Caco-2 (cell line): ENCODE measurements at regions of chr12 and their contacts with region 1.

Region 1: GRCh38 chr12:1690578-1691122 is at the start of gene ADIPOR2:
- DNase-seq: peak; percentile 98 to 99
- H3K4me3 ChIP-seq: peak within 1 kb of the TSS; percentile 76
- H3K4me3 Mint-ChIP-seq: peak within 1 kb of the TSS; percentile 81
- H3K27ac Mint-ChIP-seq: peak within 1 kb of the TSS; percentile 85
- H3K4me1 ChIP-seq: peaks cover 27% of the 10 kb centered on the region
- H3K4me1 Mint-ChIP-seq: peaks cover 12% of the 10 kb centered on the region
- H3K27me3 ChIP-seq: no peaks in the 10 kb centered on the region
- H3K27me3 Mint-ChIP-seq: no peaks in the 10 kb centered on the region
- CTCF ChIP-seq: no peak
- total RNA-seq, gene ADIPOR2: 119 and 125 TPM in 2 replicates

Region 2: GRCh38 chr12:1297206-1297605 is 393.4 kb before region 1 on chr12:
- CTCF ChIA-PET with region 1: no interaction called
- POLR2A ChIA-PET with region 1: no interaction called
- intact Hi-C with region 1: no loop called
- DNase-seq: no peak
- H3K4me3 ChIP-seq: no peak overlapping the region
- H3K4me3 Mint-ChIP-seq: no peak overlapping the region
- H3K27ac Mint-ChIP-seq: no peak overlapping the region
- H3K4me1 ChIP-seq: 0 out of 2 replicates have a peak, but pooled peaks cover 3% of the 10 kb centered on the region
- H3K4me1 Mint-ChIP-seq: no peaks in the 10 kb centered on the region
- H3K27me3 ChIP-seq: no peaks in the 10 kb centered on the region
- H3K27me3 Mint-ChIP-seq: no peaks in the 10 kb centered on the region
- CTCF ChIP-seq: no peak

Region 3: DNA sequence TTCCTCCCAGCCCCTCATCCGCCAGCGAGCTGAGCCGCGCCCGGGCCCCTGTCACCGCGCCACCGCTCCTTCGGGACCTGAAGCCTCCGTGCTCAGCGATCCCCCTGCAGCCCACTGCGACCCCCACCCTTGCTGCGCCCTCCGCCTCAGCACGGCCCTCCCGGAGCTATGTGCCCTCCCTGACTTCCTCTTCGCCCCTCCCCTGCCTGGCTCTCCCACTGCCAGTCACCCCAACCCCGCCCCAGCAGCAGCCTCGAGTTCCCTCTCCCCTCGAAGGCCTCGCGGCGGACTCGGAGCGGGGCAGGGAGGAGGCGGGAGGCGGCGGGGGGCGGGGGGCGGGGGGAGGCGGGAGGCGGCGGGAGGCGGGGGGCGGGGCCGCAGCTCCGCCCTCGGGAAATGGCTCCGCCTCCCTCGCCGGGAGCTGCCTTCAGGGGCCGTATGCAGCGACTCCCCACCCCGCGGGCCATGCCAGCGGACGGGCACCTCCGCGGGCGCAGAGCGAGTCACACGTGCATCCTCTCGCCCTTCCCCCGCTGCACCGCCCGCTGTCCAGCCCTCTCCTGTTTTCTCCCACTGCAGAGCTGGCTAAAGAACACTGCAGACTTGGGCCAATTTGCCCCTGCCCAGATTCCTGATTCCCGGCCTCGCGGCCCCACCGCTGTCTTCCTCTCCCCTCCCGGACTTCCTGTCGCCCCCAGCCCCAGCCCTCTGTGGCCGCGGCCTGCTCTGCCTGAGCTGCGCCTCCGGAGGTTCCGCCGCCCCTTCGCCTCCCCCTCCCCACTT is 28.9 kb before region 1 on chr12:
- CTCF ChIA-PET with region 1: interaction called, 3 read pairs
- POLR2A ChIA-PET with region 1: interaction called, 13 read pairs
- intact Hi-C with region 1: loop called (anchors 2 kb)
- DNase-seq: peak; percentile 88 to 89
- H3K4me3 ChIP-seq: peak overlapping the region; percentile 67
- H3K4me3 Mint-ChIP-seq: peak overlapping the region; percentile 82
- H3K27ac Mint-ChIP-seq: no peak overlapping the region
- H3K4me1 ChIP-seq: peaks cover 21% of the 10 kb centered on the region
- H3K4me1 Mint-ChIP-seq: peaks cover 1% of the 10 kb centered on the region
- H3K27me3 ChIP-seq: no peaks in the 10 kb centered on the region
- H3K27me3 Mint-ChIP-seq: no peaks in the 10 kb centered on the region
- CTCF ChIP-seq: no peak

Region 4: GRCh38 chr12:1668833-1669543 is 21.7 kb before region 1 on chr12:
- CTCF ChIA-PET with region 1: interaction called, 4 read pairs
- POLR2A ChIA-PET with region 1: interaction called, 25 read pairs
- intact Hi-C with region 1: no loop called
- DNase-seq: no peak
- H3K4me3 ChIP-seq: no peak overlapping the region
- H3K4me3 Mint-ChIP-seq: no peak overlapping the region
- H3K27ac Mint-ChIP-seq: peak overlapping the region; percentile 46
- H3K4me1 ChIP-seq: peaks cover 28% of the 10 kb centered on the region
- H3K4me1 Mint-ChIP-seq: peaks cover 22% of the 10 kb centered on the region
- H3K27me3 ChIP-seq: no peaks in the 10 kb centered on the region
- H3K27me3 Mint-ChIP-seq: no peaks in the 10 kb centered on the region
- CTCF ChIP-seq: no peak